PC-9 (cell line): ENCODE measurements at regions of chr9 and their contacts with region 1.

Region 1: DNA sequence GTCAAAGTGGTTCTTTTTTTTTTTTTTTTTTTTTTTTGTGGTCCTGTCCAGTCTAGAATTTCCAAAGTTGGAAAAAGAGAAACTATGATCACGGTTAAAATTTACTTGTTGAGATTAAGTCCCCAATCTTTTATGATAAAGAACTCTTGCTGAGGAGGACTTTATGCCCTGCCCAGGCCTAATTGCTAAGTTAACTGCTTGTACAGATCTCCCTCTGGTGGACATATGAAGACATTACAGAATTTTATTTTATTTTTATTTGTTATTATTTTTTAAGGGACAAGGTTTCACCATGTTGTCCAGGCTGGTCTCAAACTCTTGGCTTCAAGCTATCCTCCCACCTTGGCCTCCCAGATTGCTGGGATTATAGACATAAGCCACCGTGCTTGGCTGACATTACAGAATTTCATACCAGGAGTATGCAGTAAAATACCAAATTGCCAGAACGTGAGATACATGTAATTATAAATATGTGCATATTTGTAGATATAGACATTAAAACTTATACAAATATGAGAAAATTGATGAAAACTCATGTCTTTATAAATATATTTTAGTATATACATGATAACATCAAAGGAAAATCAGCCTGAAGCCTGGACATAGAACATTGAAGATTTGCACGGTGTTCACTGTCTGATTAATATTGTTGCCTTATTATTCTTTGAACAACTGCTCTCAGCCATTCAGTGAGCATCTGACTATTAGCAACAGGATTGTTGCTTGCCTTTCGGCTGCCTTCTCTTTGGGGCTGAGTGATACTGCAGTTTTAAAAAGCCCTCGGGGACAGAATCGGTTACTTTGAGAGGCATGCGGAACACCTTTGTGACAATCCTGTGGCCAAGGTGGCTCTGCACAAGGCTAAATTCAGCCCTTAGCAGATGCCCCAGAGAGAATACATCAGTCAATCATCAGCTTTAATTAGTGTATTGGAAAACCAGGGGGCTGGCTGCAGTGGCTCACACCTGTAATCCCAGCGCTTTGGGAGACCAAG is 91.0 kb downstream of the RFK start:
- DNase-seq: no peak
- H3K4me3 ChIP-seq: no peak overlapping the region
- H3K27ac ChIP-seq: no peak overlapping the region
- H3K4me1 ChIP-seq: no peaks in the 10 kb centered on the region
- H3K27me3 ChIP-seq: no peaks in the 10 kb centered on the region
- CTCF ChIP-seq: peak; percentile 84

Region 2: GRCh38 chr9:75185585-75186170 is 1117.6 kb before region 1 on chr9:
- CTCF ChIA-PET with region 1: interaction called, 13 read pairs
- POLR2A ChIA-PET with region 1: no interaction called
- intact Hi-C with region 1: no loop called
- DNase-seq: peak in 1 of 2 experiments; percentile 25
- H3K4me3 ChIP-seq: no peak overlapping the region
- H3K27ac ChIP-seq: no peak overlapping the region
- H3K4me1 ChIP-seq: peaks cover 14% of the 10 kb centered on the region
- H3K27me3 ChIP-seq: no peaks in the 10 kb centered on the region
- CTCF ChIP-seq: peak; percentile 63

Region 3: DNA sequence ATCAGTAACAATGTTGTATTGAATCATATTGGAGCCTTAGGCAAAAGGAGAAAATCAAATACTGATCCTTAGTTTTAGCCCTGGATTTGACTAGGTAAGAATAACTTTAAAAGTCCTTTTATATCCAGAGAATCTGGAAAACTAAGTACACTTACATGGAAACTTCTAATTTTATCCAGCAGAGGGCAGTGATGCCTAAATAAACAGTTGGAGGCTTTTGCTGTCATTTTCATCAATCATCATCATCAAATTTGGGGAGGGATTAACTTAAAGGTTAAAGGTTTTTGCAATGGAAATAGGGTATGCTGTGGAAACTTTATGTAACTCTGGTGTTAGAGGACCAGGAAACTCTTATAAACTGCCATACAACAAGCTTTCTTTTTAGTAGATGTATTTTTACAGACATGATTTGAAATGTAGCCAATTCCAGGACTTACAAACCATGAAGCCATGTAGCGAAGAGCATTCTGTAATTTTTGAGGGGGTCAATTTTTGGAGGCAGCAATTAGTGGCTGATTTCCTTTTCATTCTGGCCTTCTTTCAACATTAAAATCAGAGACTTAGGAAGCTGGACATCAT is 1102.3 kb before region 1 on chr9:
- CTCF ChIA-PET with region 1: interaction called, 3 read pairs
- POLR2A ChIA-PET with region 1: interaction called, 5 read pairs
- intact Hi-C with region 1: loop called (anchors 2 kb)
- DNase-seq: peak; percentile 9 to 46
- H3K4me3 ChIP-seq: no peak overlapping the region
- H3K27ac ChIP-seq: no peak overlapping the region
- H3K4me1 ChIP-seq: no peaks in the 10 kb centered on the region
- H3K27me3 ChIP-seq: no peaks in the 10 kb centered on the region
- CTCF ChIP-seq: peak; percentile 84

Region 4: GRCh38 chr9:76181020-76181641 is 122.1 kb before region 1 on chr9:
- CTCF ChIA-PET with region 1: no interaction called
- POLR2A ChIA-PET with region 1: no interaction called
- intact Hi-C with region 1: loop called (anchors 10 kb)
- DNase-seq: peak; percentile 62 to 99
- H3K4me3 ChIP-seq: peak overlapping the region; percentile 37; the same call in 1 of the 2 replicates
- H3K27ac ChIP-seq: peak overlapping the region; percentile 76
- H3K4me1 ChIP-seq: peaks cover 22% of the 10 kb centered on the region
- H3K27me3 ChIP-seq: no peaks in the 10 kb centered on the region
- CTCF ChIP-seq: no peak

Region 5: GRCh38 chr9:76271755-76272154 is 31.5 kb before region 1 on chr9:
- CTCF ChIA-PET with region 1: no interaction called
- POLR2A ChIA-PET with region 1: no interaction called
- intact Hi-C with region 1: no loop called
- DNase-seq: no peak
- H3K4me3 ChIP-seq: no peak overlapping the region
- H3K27ac ChIP-seq: no peak overlapping the region
- H3K4me1 ChIP-seq: peaks cover 6% of the 10 kb centered on the region
- H3K27me3 ChIP-seq: no peaks in the 10 kb centered on the region
- CTCF ChIP-seq: no peak

Region 6: GRCh38 chr9:76365028-76365427 is 61.8 kb after region 1 on chr9:
- CTCF ChIA-PET with region 1: no interaction called
- POLR2A ChIA-PET with region 1: no interaction called
- intact Hi-C with region 1: no loop called
- DNase-seq: peak; percentile 47 to 94
- H3K4me3 ChIP-seq: no peak overlapping the region
- H3K27ac ChIP-seq: peak overlapping the region; percentile 21; the same call in 1 of the 2 replicates
- H3K4me1 ChIP-seq: peaks cover 40% of the 10 kb centered on the region
- H3K27me3 ChIP-seq: no peaks in the 10 kb centered on the region
- CTCF ChIP-seq: no peak

Region 7: DNA sequence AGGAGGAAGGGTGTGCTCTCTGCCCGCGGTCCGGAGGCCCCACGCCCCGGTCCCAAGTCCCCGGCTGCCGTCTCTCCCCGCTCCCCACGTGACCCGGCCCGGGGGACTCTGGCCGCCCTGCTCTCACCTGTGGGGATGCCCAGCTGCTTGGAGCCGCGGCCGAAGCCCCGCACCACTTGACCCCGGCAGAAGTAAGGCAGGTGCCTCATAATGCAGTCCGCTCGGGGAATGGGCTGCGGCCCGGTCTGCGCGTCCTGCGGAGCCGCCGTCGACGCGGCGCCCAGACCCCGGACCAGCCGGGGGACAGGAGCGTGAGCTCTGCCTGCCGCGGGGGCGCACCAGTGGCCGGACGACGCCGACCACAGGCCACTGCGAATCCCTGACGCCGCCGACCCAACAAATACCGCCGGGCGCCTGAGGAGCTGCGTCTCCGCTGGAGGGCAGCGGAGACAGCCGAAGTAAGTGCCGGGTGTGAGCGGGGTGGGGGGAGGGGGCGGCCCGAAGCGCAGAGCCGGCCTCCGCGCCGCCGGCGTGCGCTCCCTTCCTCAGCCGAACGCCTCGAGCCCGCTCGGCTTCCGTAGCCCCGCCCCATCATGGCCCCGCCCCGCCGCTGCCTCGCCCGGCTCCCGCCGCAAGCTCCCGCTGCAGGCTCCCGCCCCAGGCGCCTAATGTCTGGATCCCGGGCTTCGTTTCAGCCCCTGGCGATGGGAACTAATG is 90.9 kb after region 1 on chr9 and contains the start of gene RFK:
- CTCF ChIA-PET with region 1: no interaction called
- POLR2A ChIA-PET with region 1: no interaction called
- intact Hi-C with region 1: loop called (anchors 2 kb)
- DNase-seq: peak; percentile 82 to 97
- H3K4me3 ChIP-seq: peak within 1 kb of the TSS; percentile 79
- H3K27ac ChIP-seq: peak within 1 kb of the TSS; percentile 85
- H3K4me1 ChIP-seq: peaks cover 22% of the 10 kb centered on the region
- H3K27me3 ChIP-seq: no peaks in the 10 kb centered on the region
- CTCF ChIP-seq: peak; percentile 53; the same call in 1 of the 2 replicates
- total RNA-seq, gene RFK: 20.6 and 24.4 TPM in 2 replicates

Region 8: DNA sequence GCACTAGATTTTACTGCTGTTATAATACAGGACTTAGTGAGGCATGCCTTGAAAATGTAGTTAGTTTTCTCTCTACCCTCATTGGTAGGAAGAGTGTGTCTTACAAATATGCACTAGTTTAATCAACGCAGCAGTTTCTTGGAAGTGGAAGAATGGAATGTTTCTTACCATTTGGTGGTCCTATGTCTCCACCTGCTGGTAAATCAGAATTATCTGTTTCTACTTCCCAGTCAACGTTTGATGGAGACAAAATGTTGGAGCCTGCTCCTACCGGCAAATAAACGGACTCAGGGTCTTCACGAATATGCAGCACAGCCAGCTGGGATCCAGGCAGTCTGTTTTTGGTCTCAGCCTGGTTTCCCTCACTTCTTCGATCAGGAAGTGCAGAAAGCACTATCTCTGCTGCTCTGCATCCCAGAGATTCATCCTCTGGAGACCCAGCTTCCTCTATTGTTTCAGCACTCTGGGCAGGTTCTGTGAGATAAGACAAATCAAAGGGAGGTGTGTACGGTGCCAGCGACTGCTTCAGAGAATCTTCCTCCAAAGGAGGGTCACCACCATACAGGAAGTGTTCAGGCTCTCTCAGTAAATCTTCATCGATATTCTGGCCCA is 401.5 kb after region 1 on chr9:
- CTCF ChIA-PET with region 1: no interaction called
- POLR2A ChIA-PET with region 1: no interaction called
- intact Hi-C with region 1: loop called (anchors 2 kb)
- DNase-seq: peak; percentile 25 to 64
- H3K4me3 ChIP-seq: no peak overlapping the region
- H3K27ac ChIP-seq: no peak overlapping the region
- H3K4me1 ChIP-seq: no peaks in the 10 kb centered on the region
- H3K27me3 ChIP-seq: peaks cover 50% of the 10 kb centered on the region
- CTCF ChIP-seq: peak; percentile 85